A673 (cell line): ENCODE measurements at regions of chr3 and their contacts with region 1.

Region 1: GRCh38 chr3:31555204-31555603 is 22.5 kb downstream of the STT3B start:
- DNase-seq: no peak
- H3K4me3 ChIP-seq: no peak overlapping the region
- H3K27ac ChIP-seq: no peak overlapping the region
- H3K4me1 ChIP-seq: peaks cover 3% of the 10 kb centered on the region
- H3K27me3 ChIP-seq: no peaks in the 10 kb centered on the region
- CTCF ChIP-seq: no peak

Region 2: DNA sequence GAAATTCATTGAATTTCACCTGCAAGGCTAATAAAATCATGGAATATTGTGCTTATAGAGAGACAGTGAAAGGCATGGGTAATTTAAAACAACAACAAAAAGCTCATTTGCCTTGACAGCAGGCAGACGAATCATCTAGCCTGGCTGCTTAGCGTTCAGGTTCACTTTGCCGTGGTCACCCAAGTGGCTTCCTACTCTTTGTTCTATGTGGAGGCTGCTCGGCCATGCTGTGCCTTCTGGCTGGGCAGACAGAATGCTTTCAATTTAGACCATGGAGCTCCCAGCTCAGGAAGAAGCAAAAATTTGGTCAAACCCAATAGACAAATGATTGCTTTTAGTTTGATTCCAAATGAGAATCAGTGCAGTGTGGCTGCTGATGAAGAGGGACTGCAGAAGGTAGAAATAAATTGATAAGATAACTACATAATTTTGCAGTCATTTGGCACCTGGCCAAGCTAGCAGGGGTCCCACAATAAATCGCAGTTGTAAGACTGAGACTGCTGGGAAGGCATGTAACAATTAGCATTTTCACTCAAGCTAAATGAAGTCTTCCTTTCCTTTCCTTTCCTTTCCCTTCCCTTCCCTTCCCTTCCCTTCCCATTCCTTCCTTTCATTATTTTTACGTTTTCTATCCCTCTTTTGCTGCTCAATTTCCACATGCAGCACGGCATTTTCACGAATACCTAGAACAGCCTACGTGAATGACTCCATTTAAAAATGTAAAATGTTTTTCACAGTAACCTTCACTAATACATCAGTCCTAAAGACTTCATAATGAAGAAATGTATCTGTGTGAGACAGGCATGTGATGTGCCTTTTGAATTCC is 1309.2 kb before region 1 on chr3:
- CTCF ChIA-PET with region 1: no interaction called
- POLR2A ChIA-PET with region 1: interaction called, 10 read pairs
- intact Hi-C with region 1: no loop called
- DNase-seq: peak; percentile 48
- H3K4me3 ChIP-seq: no peak overlapping the region
- H3K27ac ChIP-seq: no peak overlapping the region
- H3K4me1 ChIP-seq: peaks cover 11% of the 10 kb centered on the region
- H3K27me3 ChIP-seq: no peaks in the 10 kb centered on the region
- CTCF ChIP-seq: no peak

Region 3: GRCh38 chr3:31384117-31384516 is 171.1 kb before region 1 on chr3:
- CTCF ChIA-PET with region 1: no interaction called
- POLR2A ChIA-PET with region 1: no interaction called
- intact Hi-C with region 1: no loop called
- DNase-seq: no peak
- H3K4me3 ChIP-seq: no peak overlapping the region
- H3K27ac ChIP-seq: no peak overlapping the region
- H3K4me1 ChIP-seq: no peaks in the 10 kb centered on the region
- H3K27me3 ChIP-seq: no peaks in the 10 kb centered on the region
- CTCF ChIP-seq: no peak